ENCODE measurements at regions of chr14 and their contacts with region 1.

Region 1: DNA sequence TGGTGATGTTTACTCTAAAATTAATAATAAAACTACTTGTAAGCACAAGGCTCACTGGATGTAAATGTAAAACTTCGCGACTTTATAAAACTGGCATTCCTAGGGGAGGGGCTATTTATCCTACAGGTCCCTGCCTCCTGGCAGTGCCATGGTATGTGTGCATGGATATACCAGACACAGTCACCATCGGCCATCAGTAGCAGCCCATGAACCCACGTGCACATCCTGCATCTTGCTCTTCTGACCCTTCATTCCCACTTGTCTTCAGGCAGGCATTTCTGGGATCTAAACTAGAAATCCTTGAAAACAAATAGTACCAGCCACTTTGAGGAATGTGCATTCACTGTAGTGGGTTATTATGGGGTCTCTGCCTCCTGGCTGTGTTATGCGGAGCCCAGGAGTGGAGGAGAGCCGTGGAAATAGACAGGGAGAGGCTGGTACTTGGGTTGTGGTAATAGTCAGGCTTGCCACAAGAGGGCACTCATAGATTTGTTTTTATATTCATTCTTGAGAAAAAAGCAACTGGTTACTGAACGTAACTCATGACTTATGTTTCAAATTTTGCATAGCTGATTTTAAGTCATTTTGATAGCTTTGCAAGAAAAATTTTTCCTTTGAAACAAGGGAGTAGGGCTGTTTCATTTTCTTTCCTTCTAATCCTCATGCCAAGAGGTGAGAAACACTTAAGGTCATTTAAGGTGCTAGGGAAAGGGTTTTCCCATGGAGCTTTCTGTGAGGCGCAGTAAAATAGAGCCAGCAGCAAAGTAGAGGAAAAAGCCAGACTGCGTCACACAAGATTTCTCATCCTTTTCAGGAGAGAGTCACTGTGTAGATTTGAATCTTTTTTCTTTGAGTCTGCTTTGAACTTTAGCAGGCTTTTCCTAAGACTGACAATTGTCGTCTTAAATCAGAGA is 17.4 kb upstream of the GALNT16 start:
- DNase-seq: peak; percentile 64
- H3K4me3 ChIP-seq: no peak overlapping the region
- H3K27ac ChIP-seq: no peak overlapping the region
- H3K4me1 ChIP-seq: no peaks in the 10 kb centered on the region
- H3K27me3 ChIP-seq: no peaks in the 10 kb centered on the region
- CTCF ChIP-seq: peak; percentile 60

Region 2: GRCh38 chr14:69460093-69460701 is 217.6 kb after region 1 on chr14:
- intact Hi-C with region 1: loop called (anchors 2 kb)
- DNase-seq: peak; percentile 59
- H3K4me3 ChIP-seq: no peak overlapping the region
- H3K27ac ChIP-seq: no peak overlapping the region
- H3K4me1 ChIP-seq: no peaks in the 10 kb centered on the region
- H3K27me3 ChIP-seq: no peaks in the 10 kb centered on the region
- CTCF ChIP-seq: peak; percentile 71

Measured in colonic mucosa (tissue), 4 donors.